Mammary epithelial cell (primary cell): ENCODE measurements at regions of chr16 and their contacts with region 1.

Region 1: GRCh38 chr16:50210266-50211038 is 55.9 kb upstream of the ADCY7 start:
- DNase-seq: peak; percentile 62
- H3K4me3 ChIP-seq: no peak overlapping the region
- H3K27ac ChIP-seq: no peak overlapping the region
- H3K4me1 ChIP-seq: peaks cover 36% of the 10 kb centered on the region
- H3K27me3 ChIP-seq: no peaks in the 10 kb centered on the region
- CTCF ChIP-seq: peak; percentile 60 to 77

Region 2: GRCh38 chr16:50065624-50066481 is 144.6 kb before region 1 on chr16 and contains the start of gene HEATR3:
- CTCF ChIA-PET with region 1: interaction called, 10 read pairs
- dilution Hi-C with region 1: no loop called
- in situ Hi-C with region 1: no loop called
- intact Hi-C with region 1: loop called (anchors 1 kb)
- DNase-seq: peak; percentile 84
- H3K4me3 ChIP-seq: peak within 1 kb of the TSS; percentile 87 to 100 (median 99)
- H3K27ac ChIP-seq: peak within 1 kb of the TSS; percentile 65
- H3K4me1 ChIP-seq: peaks cover 15% of the 10 kb centered on the region
- H3K27me3 ChIP-seq: no peaks in the 10 kb centered on the region
- CTCF ChIP-seq: no peak
- total RNA-seq, gene HEATR3: 18.7 to 23.8 TPM

Region 3: GRCh38 chr16:50136399-50136798 is 74.1 kb before region 1 on chr16:
- CTCF ChIA-PET with region 1: interaction called, 5 read pairs
- dilution Hi-C with region 1: no loop called
- in situ Hi-C with region 1: no loop called
- intact Hi-C with region 1: loop called (anchors 1 kb)
- DNase-seq: no peak
- H3K4me3 ChIP-seq: no peak overlapping the region
- H3K27ac ChIP-seq: no peak overlapping the region
- H3K4me1 ChIP-seq: no peaks in the 10 kb centered on the region
- H3K27me3 ChIP-seq: peaks cover 1% of the 10 kb centered on the region
- CTCF ChIP-seq: no peak

Region 4: GRCh38 chr16:50266337-50267091 is 56.1 kb after region 1 on chr16 and contains the start of gene ADCY7:
- CTCF ChIA-PET with region 1: no interaction called
- dilution Hi-C with region 1: loop called (anchors 5 kb)
- in situ Hi-C with region 1: no loop called
- intact Hi-C with region 1: no loop called
- DNase-seq: peak; percentile 22
- H3K4me3 ChIP-seq: no peak within 1 kb of the TSS
- H3K27ac ChIP-seq: no peak within 1 kb of the TSS
- H3K4me1 ChIP-seq: no peaks in the 10 kb centered on the region
- H3K27me3 ChIP-seq: no peaks in the 10 kb centered on the region
- CTCF ChIP-seq: no peak
- total RNA-seq, gene ADCY7: 8.2 to 16.3 TPM

Region 5: DNA sequence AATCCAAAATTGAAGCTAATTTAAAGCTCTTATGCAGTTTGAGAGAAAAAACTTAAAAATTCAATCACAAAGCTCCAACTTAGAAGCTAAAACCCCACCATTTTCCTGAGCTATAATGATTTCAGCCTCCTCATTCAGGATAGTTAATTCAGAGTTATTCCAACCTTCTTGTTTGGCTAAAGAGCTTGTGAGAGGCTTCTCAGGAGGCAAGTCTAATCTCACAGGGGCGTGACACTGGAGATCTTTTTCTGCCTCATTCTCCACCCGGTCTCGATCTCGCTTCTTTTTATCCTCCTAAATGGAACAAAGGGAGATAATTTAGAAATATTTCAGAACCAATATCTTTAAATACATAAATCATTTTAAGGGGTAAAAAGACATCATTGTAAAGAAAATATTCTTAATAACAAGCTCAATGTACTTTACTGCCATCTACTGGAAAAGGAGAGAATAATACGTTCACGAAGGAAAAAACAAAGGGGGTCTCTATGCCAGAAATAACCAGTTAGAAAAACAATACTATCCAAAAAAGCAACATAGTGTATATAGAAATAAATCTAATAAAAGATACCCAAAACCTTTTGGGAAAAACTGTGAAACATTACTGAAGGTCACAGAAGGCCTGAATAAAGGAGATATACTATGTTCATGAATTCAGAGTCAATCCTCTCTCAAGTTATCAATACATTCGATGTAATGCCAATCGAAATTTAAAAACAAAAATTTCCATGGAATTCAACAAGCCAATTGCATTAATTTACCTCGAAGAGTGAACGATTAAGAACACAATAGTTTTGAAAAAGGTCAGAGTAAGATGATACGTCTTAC is 144.4 kb after region 1 on chr16:
- CTCF ChIA-PET with region 1: interaction called, 3 read pairs
- dilution Hi-C with region 1: no loop called
- in situ Hi-C with region 1: no loop called
- intact Hi-C with region 1: loop called (anchors 1 kb)
- DNase-seq: no peak
- H3K4me3 ChIP-seq: no peak overlapping the region
- H3K27ac ChIP-seq: no peak overlapping the region
- H3K4me1 ChIP-seq: peaks cover 1% of the 10 kb centered on the region
- H3K27me3 ChIP-seq: no peaks in the 10 kb centered on the region
- CTCF ChIP-seq: peak; percentile 47 to 53

Region 6: GRCh38 chr16:50747207-50747956 is 536.9 kb after region 1 on chr16:
- CTCF ChIA-PET with region 1: no interaction called
- dilution Hi-C with region 1: no loop called
- in situ Hi-C with region 1: no loop called
- intact Hi-C with region 1: loop called (anchors 5 kb)
- DNase-seq: peak; percentile 34
- H3K4me3 ChIP-seq: no peak overlapping the region
- H3K27ac ChIP-seq: no peak overlapping the region
- H3K4me1 ChIP-seq: peaks cover 22% of the 10 kb centered on the region
- H3K27me3 ChIP-seq: no peaks in the 10 kb centered on the region
- CTCF ChIP-seq: peak; percentile 23 to 45